Dendritic cell treated with granulocyte-macrophage colony-stimulating factor and Interleukin-4, amounts not matched to agents 40 ng/mL and 50 ng/mL, for 4 days (primary cell): ENCODE measurements at regions of chr15 and their contacts with region 1.

Region 1: GRCh38 chr15:59492389-59493377 is 54.7 kb downstream of the FAM81A start:
- H3K4me3 Mint-ChIP-seq: no peak overlapping the region
- H3K27ac Mint-ChIP-seq: no peak overlapping the region
- H3K4me1 Mint-ChIP-seq: peaks cover 6% of the 10 kb centered on the region
- H3K27me3 Mint-ChIP-seq: peaks cover 1% of the 10 kb centered on the region

Region 2: GRCh38 chr15:58957101-58957973 is 535.3 kb before region 1 on chr15:
- intact Hi-C with region 1: loop called (anchors 10 kb)
- H3K4me3 Mint-ChIP-seq: no peak overlapping the region
- H3K27ac Mint-ChIP-seq: no peak overlapping the region
- H3K4me1 Mint-ChIP-seq: peaks cover 15% of the 10 kb centered on the region
- H3K27me3 Mint-ChIP-seq: no peaks in the 10 kb centered on the region

Region 3: GRCh38 chr15:58987489-58988005 is 505.1 kb before region 1 on chr15 and contains the start of gene RNF111:
- intact Hi-C with region 1: loop called (anchors 10 kb)
- H3K4me3 Mint-ChIP-seq: peak within 1 kb of the TSS; percentile 95
- H3K27ac Mint-ChIP-seq: peak within 1 kb of the TSS; percentile 98
- H3K4me1 Mint-ChIP-seq: peaks cover 48% of the 10 kb centered on the region
- H3K27me3 Mint-ChIP-seq: no peaks in the 10 kb centered on the region

Region 4: GRCh38 chr15:59160880-59161593 is 331.6 kb before region 1 on chr15:
- intact Hi-C with region 1: loop called (anchors 5 kb)
- H3K4me3 Mint-ChIP-seq: no peak overlapping the region
- H3K27ac Mint-ChIP-seq: no peak overlapping the region
- H3K4me1 Mint-ChIP-seq: peaks cover 21% of the 10 kb centered on the region
- H3K27me3 Mint-ChIP-seq: no peaks in the 10 kb centered on the region

Region 5: GRCh38 chr15:59247364-59247763 is 245.3 kb before region 1 on chr15:
- intact Hi-C with region 1: loop called (anchors 1 kb)
- H3K4me3 Mint-ChIP-seq: no peak overlapping the region
- H3K27ac Mint-ChIP-seq: no peak overlapping the region
- H3K4me1 Mint-ChIP-seq: peaks cover 5% of the 10 kb centered on the region
- H3K27me3 Mint-ChIP-seq: no peaks in the 10 kb centered on the region

Region 6: DNA sequence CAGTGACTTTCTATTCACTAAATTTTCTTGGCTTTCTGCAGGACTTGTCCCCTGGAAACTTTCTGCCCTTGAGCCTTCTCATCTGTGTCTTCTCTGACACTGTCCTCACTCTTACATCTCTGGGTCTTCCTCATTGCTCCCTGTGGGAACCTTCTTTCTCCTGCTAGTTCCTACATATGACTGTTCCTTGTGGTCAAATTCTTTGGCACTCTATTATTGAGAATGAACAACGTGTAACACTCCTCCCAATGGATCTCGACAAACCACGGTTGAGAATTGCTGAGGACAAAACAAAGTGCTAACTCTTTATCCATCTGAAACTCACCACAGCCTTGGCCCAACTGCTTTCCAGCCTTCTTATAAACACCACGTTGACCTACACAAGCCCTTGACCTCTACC is 58.2 kb before region 1 on chr15:
- intact Hi-C with region 1: no loop called
- H3K4me3 Mint-ChIP-seq: no peak overlapping the region
- H3K27ac Mint-ChIP-seq: no peak overlapping the region
- H3K4me1 Mint-ChIP-seq: peaks cover 27% of the 10 kb centered on the region
- H3K27me3 Mint-ChIP-seq: peaks cover 47% of the 10 kb centered on the region

Region 7: GRCh38 chr15:59611276-59612260 is 118.9 kb after region 1 on chr15 and contains the start of gene GCNT3:
- intact Hi-C with region 1: no loop called
- H3K4me3 Mint-ChIP-seq: no peak within 1 kb of the TSS
- H3K27ac Mint-ChIP-seq: peak within 1 kb of the TSS; percentile 31
- H3K4me1 Mint-ChIP-seq: peaks cover 28% of the 10 kb centered on the region
- H3K27me3 Mint-ChIP-seq: peaks cover 33% of the 10 kb centered on the region